Dendritic cell treated with granulocyte-macrophage colony-stimulating factor and Interleukin-4, amounts not matched to agents 40 ng/mL and 50 ng/mL, for 4 days (primary cell): ENCODE measurements at regions of chr16 and their contacts with region 1.

Region 1: DNA sequence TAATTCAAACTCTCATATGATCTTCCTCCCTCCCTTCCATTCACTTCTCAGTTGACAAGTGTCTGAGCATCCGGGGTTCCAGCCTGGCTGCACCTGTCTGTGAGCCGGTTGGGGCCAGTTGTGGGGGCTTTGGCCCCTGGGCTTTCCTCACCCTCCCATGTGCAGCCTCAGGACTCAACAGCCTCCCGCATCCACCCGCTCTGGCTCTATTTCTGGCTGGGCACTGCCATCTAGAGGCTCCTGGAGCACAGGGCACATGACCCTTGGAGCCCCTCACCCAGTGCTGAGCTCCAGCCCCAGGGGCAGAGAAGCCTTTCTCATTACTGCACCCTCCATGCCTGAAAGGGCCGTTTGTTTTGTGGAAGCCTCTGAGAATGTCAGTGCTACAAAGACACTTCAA is 43.3 kb downstream of the HAPSTR1 start:
- H3K4me3 Mint-ChIP-seq: no peak overlapping the region
- H3K27ac Mint-ChIP-seq: no peak overlapping the region
- H3K4me1 Mint-ChIP-seq: peaks cover 14% of the 10 kb centered on the region
- H3K27me3 Mint-ChIP-seq: peaks cover 20% of the 10 kb centered on the region

Region 2: DNA sequence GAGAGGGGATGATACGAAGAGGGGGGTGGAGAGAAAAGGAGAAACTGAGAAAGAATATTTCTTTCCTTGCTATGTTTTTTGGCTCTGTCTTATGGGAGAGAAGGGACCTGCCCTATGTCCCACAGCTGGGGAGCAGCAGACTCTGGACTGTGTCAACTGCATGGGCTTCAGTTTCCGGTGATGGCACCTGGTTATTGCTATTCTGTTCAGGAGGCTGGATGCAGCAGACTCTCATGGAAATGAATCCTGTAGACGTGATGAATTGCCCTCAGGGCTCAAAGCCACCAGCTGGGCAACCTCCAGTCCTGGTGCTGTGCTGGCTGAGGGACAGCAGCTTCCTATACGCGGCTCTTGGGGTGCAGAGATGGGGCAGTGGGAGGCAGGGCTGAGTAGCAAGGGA is 77.9 kb after region 1 on chr16:
- intact Hi-C with region 1: no loop called
- H3K4me3 Mint-ChIP-seq: no peak overlapping the region
- H3K27ac Mint-ChIP-seq: no peak overlapping the region
- H3K4me1 Mint-ChIP-seq: no peaks in the 10 kb centered on the region
- H3K27me3 Mint-ChIP-seq: no peaks in the 10 kb centered on the region

Region 3: DNA sequence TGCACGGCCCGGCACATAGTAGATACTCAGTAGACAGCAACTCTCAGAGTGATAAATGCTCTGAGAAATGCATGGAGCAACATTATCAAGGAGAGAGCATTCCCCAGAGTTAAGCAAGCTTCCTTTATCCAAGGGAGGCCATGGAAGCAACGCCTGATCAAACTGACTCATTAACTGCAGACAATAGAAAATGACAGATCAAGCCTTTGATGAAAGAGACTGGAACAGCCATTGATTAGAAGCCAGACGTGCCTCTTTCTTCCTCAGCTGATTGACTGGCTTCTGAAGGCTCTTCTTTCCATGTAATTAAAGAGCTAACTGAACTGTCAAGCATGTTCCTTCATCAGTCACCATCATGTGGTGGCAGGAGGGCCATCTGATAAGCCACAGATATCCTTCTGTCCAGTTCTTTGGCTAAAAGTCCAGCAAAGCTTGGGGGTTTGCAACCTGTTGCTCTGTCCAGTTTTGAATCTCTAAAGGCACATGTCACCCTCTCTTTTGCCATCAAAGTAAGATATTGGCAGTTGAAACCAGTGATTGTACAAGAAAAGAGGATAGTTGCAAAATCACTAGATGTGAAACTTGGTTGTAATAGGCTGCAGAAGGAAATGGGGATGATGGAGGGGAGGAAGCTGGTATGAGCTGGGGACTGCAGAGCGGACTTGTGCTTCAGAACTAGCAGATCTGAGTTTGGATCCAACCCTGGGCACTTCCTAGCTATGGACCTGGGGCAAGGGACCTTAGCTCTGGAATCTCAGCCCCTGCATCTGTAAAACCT is 144.7 kb after region 1 on chr16:
- intact Hi-C with region 1: no loop called
- H3K4me3 Mint-ChIP-seq: no peak overlapping the region
- H3K27ac Mint-ChIP-seq: no peak overlapping the region
- H3K4me1 Mint-ChIP-seq: peaks cover 14% of the 10 kb centered on the region
- H3K27me3 Mint-ChIP-seq: no peaks in the 10 kb centered on the region

Region 4: DNA sequence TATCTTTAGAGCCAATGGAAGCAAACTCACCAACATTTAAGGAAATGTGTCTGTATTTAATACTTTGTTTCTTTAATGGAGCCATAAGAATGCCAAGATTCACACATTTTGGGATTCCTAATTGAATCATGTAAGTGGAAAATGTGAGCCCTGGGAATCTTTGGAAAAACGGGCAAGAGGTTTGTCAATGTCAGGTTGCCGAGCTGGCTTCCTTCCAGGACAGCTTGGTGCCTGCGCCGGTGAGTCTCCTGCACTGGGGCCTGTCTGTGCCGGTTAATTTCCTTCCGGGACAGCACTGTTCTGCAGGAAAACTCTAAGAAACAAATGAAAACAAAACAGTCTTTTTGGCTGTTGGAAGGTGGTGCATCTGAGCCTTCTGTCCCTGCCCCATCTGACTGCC is 167.3 kb after region 1 on chr16:
- intact Hi-C with region 1: no loop called
- H3K4me3 Mint-ChIP-seq: no peak overlapping the region
- H3K27ac Mint-ChIP-seq: no peak overlapping the region
- H3K4me1 Mint-ChIP-seq: no peaks in the 10 kb centered on the region
- H3K27me3 Mint-ChIP-seq: no peaks in the 10 kb centered on the region

Region 5: GRCh38 chr16:10181196-10182162 is 1046.7 kb after region 1 on chr16:
- intact Hi-C with region 1: loop called (anchors 5 kb)
- H3K4me3 Mint-ChIP-seq: peak overlapping the region; percentile 37
- H3K27ac Mint-ChIP-seq: no peak overlapping the region
- H3K4me1 Mint-ChIP-seq: peaks cover 9% of the 10 kb centered on the region
- H3K27me3 Mint-ChIP-seq: peaks cover 75% of the 10 kb centered on the region